ENCODE measurements at regions of chr1 and their contacts with region 1.

Region 1: GRCh38 chr1:109655601-109656519 is at the start of gene GSTM4:
- DNase-seq: peak; percentile 39 to 93
- H3K4me3 ChIP-seq: peak within 1 kb of the TSS; percentile 62 to 79
- H3K27ac ChIP-seq: peak within 1 kb of the TSS; percentile 84 to 94
- H3K4me1 ChIP-seq: peaks cover 7 to 13% of the 10 kb centered on the region in 2 donors
- H3K27me3 ChIP-seq: no peaks in the 10 kb centered on the region
- CTCF ChIP-seq: no peak
- total RNA-seq, gene GSTM4: 27.8 TPM

Region 2: GRCh38 chr1:109667452-109668122 is 11.7 kb after region 1 on chr1 and contains the start of gene GSTM2:
- intact Hi-C with region 1: loop called (anchors 1 kb)
- DNase-seq: peak; percentile 80 to 97
- H3K4me3 ChIP-seq: peak within 1 kb of the TSS; percentile 59 to 66
- H3K27ac ChIP-seq: peak within 1 kb of the TSS; percentile 22 to 28
- H3K4me1 ChIP-seq: peaks cover 0 to 5% of the 10 kb centered on the region in 2 donors
- H3K27me3 ChIP-seq: no peaks in the 10 kb centered on the region
- CTCF ChIP-seq: no peak
- total RNA-seq, gene GSTM2: 20.3 TPM